ENCODE measurements at regions of chr4 and their contacts with region 1.

Region 1: DNA sequence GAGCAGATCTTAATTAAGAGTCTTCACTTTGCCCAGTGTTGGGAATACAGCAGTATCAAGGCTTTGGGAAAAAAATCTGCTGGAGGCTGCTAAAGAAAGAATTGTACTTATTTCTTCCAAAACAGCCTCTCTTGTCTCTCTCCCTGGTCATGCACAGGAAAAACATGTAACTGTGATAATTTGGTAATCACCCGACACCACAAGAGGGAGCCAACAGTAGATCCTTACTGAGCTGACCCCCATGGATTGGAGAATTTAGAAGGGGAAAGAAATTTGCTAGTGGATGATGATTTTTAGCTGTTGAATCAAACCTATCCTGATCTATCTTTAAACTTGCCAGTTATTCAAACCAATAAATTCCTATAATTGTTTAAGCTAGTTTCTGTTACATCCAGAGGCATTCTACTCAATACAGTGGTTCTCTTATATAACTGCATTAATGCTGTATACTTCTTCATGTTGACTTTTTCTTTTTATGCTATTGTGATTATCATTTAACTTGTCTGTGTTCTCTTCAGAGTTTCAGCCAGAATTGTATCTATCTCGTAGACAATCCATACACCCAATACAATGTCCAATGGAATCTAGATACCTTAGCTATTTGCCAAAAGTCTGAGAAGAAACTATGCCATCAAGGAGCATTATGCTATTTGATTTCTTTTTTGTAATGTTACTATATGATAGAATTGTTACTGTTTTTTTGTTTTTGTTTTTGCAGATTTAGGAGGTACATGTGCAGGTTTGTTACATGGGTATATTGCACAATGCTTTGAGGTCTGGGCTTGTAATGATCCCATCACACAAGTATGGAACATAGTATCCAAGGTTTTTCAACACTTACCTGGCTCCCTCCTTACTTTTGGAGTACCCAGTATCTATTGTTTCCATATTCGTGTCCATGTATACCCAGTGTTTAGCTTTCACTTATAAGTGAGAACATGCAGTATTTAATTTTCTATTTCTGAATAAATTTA is 31.3 kb upstream of the ARHGEF38 start:
- DNase-seq: peak; percentile 61
- ATAC-seq: peak; percentile 77
- H3K4me3 ChIP-seq: no peak overlapping the region
- H3K27ac ChIP-seq: no peak overlapping the region
- H3K4me1 ChIP-seq: no peaks in the 10 kb centered on the region
- H3K27me3 ChIP-seq: no peaks in the 10 kb centered on the region
- CTCF ChIP-seq: peak; percentile 78

Region 2: DNA sequence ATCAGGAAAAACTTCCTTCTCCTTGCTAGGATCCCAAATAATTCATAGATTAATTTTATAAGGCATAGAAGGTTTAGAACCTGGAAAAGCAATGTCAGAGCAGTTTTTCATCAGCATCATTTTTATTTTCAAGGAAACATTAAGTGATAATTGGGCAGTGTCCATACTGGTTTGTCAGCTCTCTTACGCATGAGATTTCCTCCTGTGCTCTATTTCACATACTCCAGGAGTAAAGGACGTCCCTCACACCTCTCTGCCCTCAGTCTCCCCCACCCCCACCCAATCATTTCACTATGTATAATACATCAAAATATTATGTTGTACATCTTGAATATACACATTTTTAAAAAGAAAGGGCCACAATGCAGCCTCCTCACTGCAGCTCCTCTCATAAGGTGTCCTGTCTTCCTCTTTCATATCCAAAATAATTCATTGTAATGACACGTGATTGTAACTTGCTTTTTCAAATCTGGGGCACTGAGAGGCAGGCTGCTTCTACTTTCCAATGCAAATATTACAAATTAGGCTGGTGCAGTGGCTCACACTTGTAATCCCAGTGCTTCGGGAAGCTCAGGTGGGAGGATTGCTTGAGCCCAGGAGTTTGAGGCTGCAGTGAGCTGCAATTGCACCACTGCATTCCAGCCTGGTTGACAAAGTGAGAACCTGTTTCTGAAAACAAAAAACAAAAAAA is 65.7 kb after region 1 on chr4:
- CTCF ChIA-PET with region 1: no interaction called
- POLR2A ChIA-PET with region 1: interaction called, 5 read pairs
- intact Hi-C with region 1: loop called (anchors 10 kb)
- DNase-seq: no peak
- ATAC-seq: 0 out of 2 replicates have a peak, but pooled peaks have one; percentile 17
- H3K4me3 ChIP-seq: peak overlapping the region; percentile 44
- H3K27ac ChIP-seq: peak overlapping the region; percentile 86
- H3K4me1 ChIP-seq: peaks cover 33% of the 10 kb centered on the region
- H3K27me3 ChIP-seq: no peaks in the 10 kb centered on the region
- CTCF ChIP-seq: no peak

Region 3: DNA sequence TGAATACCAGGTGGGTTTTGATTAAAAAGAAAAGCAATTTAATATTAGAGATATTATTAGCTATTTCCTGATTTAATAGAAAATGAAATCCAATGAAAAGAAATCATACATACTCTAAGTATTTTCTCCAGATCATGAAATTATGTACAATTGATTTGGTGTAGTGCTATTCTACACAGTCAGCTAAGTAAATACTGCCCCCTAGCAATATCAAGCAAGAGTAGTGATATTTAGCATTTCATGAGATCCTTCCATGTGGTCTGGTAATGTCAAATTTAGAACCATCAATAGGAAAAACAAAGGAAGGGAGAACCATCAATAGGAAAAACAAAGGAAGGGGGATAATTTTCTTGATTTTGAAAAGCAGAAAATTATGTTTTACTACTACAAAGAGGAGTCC is 680.3 kb after region 1 on chr4:
- CTCF ChIA-PET with region 1: no interaction called
- POLR2A ChIA-PET with region 1: no interaction called
- intact Hi-C with region 1: loop called (anchors 5 kb)
- DNase-seq: peak; percentile 33
- ATAC-seq: peak; percentile 59; the same call in 1 of the 2 replicates
- H3K4me3 ChIP-seq: no peak overlapping the region
- H3K27ac ChIP-seq: no peak overlapping the region
- H3K4me1 ChIP-seq: no peaks in the 10 kb centered on the region
- H3K27me3 ChIP-seq: no peaks in the 10 kb centered on the region
- CTCF ChIP-seq: peak; percentile 71

Measured in PC-3 (cell line).